Activated CD4-positive, alpha-beta memory T cell treated with anti-CD3 and anti-CD28 coated beads for 36 hours (primary cell): ENCODE measurements at regions of chr17 and their contacts with region 1.

Region 1: GRCh38 chr17:7014261-7014994 is 2.0 kb downstream of the RNASEK start:
- DNase-seq: peak; percentile 99
- H3K4me3 Mint-ChIP-seq: peak overlapping the region; percentile 96
- H3K27ac Mint-ChIP-seq: peak overlapping the region; percentile 99
- H3K4me1 Mint-ChIP-seq: peaks cover 58% of the 10 kb centered on the region
- H3K27me3 Mint-ChIP-seq: no peaks in the 10 kb centered on the region

Region 2: GRCh38 chr17:6651357-6651918 is 363.0 kb before region 1 on chr17 and contains the starts of genes C17orf100 and MED31:
- CTCF ChIA-PET with region 1: no interaction called
- POLR2A ChIA-PET with region 1: no interaction called
- intact Hi-C with region 1: loop called (anchors 2 kb)
- DNase-seq: peak; percentile 97
- H3K4me3 Mint-ChIP-seq: peak within 1 kb of the TSS; percentile 99
- H3K27ac Mint-ChIP-seq: peak within 1 kb of the TSS; percentile 97
- H3K4me1 Mint-ChIP-seq: peaks cover 60% of the 10 kb centered on the region
- H3K27me3 Mint-ChIP-seq: no peaks in the 10 kb centered on the region
- total RNA-seq, gene C17orf100: 1.5 to 1.8 TPM
- total RNA-seq, gene MED31: 22.6 to 25.9 TPM

Region 3: GRCh38 chr17:6753006-6753445 is 261.4 kb before region 1 on chr17:
- CTCF ChIA-PET with region 1: no interaction called
- POLR2A ChIA-PET with region 1: no interaction called
- intact Hi-C with region 1: loop called (anchors 10 kb)
- DNase-seq: peak; percentile 52
- H3K4me3 Mint-ChIP-seq: no peak overlapping the region
- H3K27ac Mint-ChIP-seq: peak overlapping the region; percentile 80
- H3K4me1 Mint-ChIP-seq: peaks cover 41% of the 10 kb centered on the region
- H3K27me3 Mint-ChIP-seq: no peaks in the 10 kb centered on the region

Region 4: DNA sequence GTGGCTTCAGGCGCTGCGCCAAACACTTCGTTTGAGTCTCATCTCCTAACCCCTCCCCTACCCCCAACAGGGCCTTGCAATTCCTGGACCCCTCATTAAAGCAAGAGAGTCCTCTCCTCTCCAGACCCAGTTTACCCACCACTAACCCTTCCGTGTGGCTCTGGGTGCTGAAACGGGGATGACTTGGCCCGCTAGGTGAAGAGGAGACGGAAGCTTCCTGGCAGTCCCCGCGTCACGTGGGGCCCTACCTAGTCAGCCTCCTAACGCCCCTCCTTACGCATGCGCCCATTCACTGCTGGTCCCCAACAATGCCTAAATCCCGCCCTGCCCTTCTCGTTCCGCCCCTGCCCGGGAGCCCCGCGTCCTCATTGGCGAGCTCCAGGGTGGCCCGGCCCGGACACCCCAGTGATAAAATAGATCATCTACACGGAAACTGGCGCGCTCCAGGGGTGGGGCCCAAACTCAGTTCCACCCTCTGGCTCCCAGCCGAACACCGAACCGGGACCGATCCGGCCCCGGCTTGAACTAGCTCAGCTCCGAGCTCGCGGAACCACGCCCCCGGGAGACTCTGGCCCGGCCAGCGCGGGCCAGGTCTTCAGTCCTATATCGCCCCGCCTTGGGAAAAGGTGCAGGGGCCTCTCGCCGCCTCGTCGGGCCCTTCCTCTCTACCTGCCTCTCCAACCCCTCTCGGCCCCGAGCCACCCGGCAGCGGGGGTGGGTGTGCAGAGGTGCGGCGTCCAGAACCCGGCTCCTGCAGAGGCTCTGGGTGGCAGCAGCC is 21.4 kb after region 1 on chr17 and contains the start of gene SLC16A13:
- CTCF ChIA-PET with region 1: interaction called, 4 read pairs
- POLR2A ChIA-PET with region 1: interaction called, 10 read pairs
- intact Hi-C with region 1: loop called (anchors 1 kb)
- DNase-seq: peak; percentile 99
- H3K4me3 Mint-ChIP-seq: peak within 1 kb of the TSS; percentile 94
- H3K27ac Mint-ChIP-seq: peak within 1 kb of the TSS; percentile 99
- H3K4me1 Mint-ChIP-seq: peaks cover 48% of the 10 kb centered on the region
- H3K27me3 Mint-ChIP-seq: no peaks in the 10 kb centered on the region
- total RNA-seq, gene SLC16A13: 10.4 to 10.7 TPM

Region 5: GRCh38 chr17:7060165-7060891 is 45.9 kb after region 1 on chr17:
- CTCF ChIA-PET with region 1: no interaction called
- POLR2A ChIA-PET with region 1: no interaction called
- intact Hi-C with region 1: loop called (anchors 2 kb)
- DNase-seq: peak; percentile 75
- H3K4me3 Mint-ChIP-seq: no peak overlapping the region
- H3K27ac Mint-ChIP-seq: peak overlapping the region; percentile 91
- H3K4me1 Mint-ChIP-seq: peaks cover 24% of the 10 kb centered on the region
- H3K27me3 Mint-ChIP-seq: peaks cover 14% of the 10 kb centered on the region